Mammary epithelial cell (primary cell): ENCODE measurements at regions of chr15 and their contacts with region 1.

Region 1: DNA sequence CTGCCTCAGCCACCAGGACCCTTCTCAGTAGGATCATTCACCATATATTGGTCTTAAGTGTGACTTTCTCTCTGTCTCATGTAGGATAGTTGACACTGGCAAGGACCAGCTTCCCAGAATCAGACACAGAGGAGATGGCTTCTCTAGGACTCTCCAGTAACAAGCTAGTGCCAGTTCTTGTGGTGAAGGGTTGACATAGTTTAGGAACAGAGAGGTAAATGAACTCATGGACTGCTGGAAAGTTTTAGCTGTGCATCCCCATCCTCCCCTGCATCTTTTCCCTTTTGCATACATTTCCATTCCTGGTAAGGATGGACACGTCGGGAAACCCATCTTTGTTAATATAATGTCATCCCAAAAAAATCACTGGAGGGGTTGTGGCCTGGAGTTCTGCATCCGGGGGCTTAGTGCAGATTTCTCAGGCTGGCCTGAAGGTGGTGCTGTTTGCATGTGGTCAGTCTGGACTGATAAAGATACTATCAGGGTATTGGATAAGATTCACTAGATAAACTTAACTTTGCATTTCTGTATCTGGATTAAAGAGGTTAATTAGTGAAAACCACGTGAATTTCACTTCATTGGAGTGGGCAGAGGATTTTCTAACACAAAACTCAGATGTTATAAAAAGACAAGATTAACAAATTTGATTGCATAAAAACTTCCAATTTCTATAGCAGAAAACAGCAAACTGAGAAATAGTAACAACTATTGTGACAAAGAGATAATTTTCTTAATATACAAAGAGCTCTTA is 110.8 kb downstream of the TBC1D2B start:
- DNase-seq: peak; percentile 24
- H3K4me3 ChIP-seq: no peak overlapping the region
- H3K27ac ChIP-seq: no peak overlapping the region
- H3K4me1 ChIP-seq: no peaks in the 10 kb centered on the region
- H3K27me3 ChIP-seq: no peaks in the 10 kb centered on the region
- CTCF ChIP-seq: peak; percentile 87 to 91

Region 2: DNA sequence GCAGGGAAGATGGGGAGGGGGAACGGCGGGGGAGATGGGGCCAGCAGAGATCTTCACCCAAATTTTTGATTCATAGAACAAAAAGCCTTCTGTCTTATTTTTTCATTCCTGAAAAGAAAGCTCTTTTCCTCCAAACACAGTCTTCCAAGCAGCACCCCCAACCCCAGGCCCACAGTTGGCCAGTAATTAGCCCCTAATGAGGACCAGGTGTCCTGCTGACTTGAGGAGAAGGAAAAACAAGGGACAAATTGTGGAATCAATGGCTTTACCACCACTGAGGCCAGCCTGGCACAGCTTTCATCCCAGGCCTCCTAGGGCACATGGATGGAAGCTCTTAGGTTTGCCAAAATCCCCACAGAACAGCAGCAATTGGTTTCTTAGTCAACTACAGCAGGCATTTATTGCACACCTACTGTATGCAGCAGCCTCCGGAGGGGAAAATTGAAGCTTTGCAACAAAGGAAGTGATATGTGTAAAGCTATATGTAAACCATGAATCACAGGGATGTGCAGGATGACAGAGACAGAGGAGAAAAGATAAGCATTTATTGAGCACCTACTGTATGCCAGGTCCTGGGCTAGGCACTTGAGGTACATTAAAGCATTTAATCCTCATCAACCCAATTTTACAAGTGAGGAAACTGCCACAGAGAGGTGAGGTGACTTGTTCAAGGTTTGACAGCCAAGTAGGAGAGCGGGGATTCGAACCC is 88.7 kb before region 1 on chr15:
- CTCF ChIA-PET with region 1: no interaction called
- dilution Hi-C with region 1: no loop called
- in situ Hi-C with region 1: no loop called
- intact Hi-C with region 1: no loop called
- DNase-seq: no peak
- H3K4me3 ChIP-seq: no peak overlapping the region
- H3K27ac ChIP-seq: no peak overlapping the region
- H3K4me1 ChIP-seq: no peaks in the 10 kb centered on the region
- H3K27me3 ChIP-seq: peaks cover 2% of the 10 kb centered on the region
- CTCF ChIP-seq: no peak

Region 3: DNA sequence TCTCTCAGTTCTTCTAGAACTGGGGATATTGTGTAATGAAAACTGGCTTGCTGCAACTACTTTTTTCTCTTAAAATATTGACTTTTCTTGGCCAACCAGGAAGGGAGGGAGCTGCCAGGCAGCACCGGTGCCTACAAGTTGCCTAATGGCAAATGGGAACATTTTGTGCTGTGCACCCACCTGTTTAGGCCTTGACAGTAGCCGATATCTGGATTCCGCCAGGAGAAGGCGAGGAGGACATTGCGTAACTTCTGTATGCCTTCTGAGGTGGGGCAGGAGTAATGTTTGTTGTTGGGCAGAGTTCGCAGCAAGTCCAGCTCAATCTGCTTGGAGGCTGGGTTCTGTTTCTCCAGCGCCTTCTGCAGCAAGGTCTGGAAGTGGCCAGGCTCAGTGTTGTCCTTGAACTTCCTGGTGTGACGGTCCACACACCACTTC is 45.9 kb after region 1 on chr15:
- CTCF ChIA-PET with region 1: no interaction called
- dilution Hi-C with region 1: loop called (anchors 5 kb)
- in situ Hi-C with region 1: no loop called
- intact Hi-C with region 1: no loop called
- DNase-seq: no peak
- H3K4me3 ChIP-seq: no peak overlapping the region
- H3K27ac ChIP-seq: no peak overlapping the region
- H3K4me1 ChIP-seq: peaks cover 13% of the 10 kb centered on the region
- H3K27me3 ChIP-seq: no peaks in the 10 kb centered on the region
- CTCF ChIP-seq: no peak

Region 4: DNA sequence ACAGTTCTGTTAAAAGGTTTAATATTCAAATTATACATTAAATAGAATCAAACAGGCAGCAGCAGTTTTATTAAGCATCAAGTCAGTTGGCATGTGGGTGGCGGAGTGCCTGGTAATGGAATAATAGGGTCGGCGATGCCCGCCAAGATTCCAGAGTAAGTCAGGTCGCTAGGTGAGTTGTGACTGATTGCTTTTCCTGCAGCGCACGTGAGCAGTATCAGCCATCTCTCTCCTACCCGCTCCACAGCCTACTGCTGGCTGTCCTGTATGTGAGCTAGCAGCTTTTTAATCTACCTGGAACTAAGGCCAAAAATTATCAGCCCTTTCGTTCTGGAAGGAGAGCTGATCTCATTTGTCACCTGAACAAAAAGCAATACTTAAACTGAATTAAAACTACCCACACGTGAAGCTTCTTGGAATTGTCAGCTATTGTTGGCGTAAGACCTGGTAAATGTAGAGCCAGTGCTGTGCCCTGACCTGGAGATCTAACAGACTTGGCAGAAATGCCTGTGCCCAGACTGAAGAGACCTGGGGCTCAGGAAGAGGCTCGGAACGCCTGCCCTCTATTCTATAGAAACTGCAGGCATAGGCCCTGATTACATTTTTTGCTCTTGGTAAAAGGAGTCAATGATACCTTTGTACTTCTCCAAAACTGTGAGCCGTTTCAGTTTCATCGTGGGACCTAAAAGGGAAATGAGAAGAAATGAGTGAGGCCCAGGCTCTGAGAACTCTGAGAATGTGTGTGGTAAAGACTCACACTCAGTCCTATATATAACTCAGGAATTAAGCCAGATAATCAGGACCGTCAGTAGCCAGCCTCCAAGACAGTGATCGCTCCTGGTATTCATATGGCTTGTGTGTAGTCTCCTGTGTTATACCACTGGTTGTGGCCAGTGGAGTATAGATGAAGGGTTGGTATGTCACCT is 204.4 kb after region 1 on chr15:
- CTCF ChIA-PET with region 1: no interaction called
- dilution Hi-C with region 1: loop called (anchors 5 kb)
- in situ Hi-C with region 1: no loop called
- intact Hi-C with region 1: no loop called
- DNase-seq: no peak
- H3K4me3 ChIP-seq: no peak overlapping the region
- H3K27ac ChIP-seq: no peak overlapping the region
- H3K4me1 ChIP-seq: no peaks in the 10 kb centered on the region
- H3K27me3 ChIP-seq: no peaks in the 10 kb centered on the region
- CTCF ChIP-seq: no peak